ENCODE measurements at regions of chr1 and their contacts with region 1.

Region 1: GRCh38 chr1:28437934-28438699 is 67.7 kb upstream of the RCC1 start:
- DNase-seq: peak; percentile 87 to 93
- H3K4me3 ChIP-seq: peak overlapping the region; percentile 56
- H3K27ac ChIP-seq: peak overlapping the region; percentile 79
- H3K4me1 ChIP-seq: peaks cover 37% of the 10 kb centered on the region
- H3K27me3 ChIP-seq: no peaks in the 10 kb centered on the region
- CTCF ChIP-seq: no peak

Region 2: DNA sequence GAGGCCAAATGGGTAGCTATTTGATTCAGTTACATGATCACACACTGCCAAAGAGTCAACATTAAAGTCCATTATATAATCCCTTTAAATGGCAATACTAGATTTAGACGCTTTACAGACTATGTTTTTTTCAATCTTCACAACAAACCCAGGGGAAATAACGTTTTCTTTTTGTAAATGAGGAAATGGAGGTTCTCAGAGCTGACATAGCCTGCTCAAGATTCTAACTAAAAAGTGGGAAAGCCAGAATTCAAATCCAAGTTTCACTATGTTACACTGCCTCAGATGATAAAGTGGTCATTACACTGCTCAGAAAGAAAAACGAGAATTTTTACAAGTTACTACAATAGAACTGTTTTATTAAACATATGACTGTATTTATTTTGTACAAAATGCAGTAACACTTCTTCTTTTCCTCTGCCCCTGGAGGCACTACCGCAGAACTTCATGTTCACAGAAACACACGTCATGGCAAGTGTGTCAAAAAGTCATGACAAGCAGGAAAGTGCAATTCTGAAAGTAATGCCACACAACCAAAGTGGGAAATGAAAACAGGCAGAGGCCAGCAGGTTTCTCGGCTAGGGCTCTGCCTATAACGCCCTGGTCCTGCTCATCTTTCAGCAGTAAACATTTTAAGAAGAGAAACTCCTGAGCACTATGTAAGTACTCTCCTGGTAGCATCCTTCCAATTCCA is 546.8 kb before region 1 on chr1:
- CTCF ChIA-PET with region 1: no interaction called
- POLR2A ChIA-PET with region 1: no interaction called
- intact Hi-C with region 1: no loop called
- DNase-seq: no peak
- H3K4me3 ChIP-seq: no peak overlapping the region
- H3K27ac ChIP-seq: no peak overlapping the region
- H3K4me1 ChIP-seq: no peaks in the 10 kb centered on the region
- H3K27me3 ChIP-seq: no peaks in the 10 kb centered on the region
- CTCF ChIP-seq: no peak

Region 3: DNA sequence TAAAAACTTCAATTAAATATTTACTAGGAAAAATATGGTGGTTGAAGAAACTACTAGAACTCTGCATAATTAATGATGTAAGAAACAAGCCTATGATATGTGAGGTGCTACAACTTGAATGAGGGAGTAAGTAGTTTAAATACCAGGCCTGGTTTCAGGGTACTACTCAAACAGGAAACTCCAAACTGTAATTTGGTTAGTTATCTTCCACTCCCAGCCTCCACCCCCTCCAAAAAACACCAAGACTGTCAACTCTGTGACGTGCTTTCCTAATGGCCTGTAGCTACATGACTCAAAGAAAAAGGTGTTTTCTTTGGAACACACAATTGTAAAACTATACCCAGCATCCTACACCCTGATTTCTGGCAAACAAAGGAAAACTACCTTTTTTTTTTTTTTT is 11.8 kb after region 1 on chr1:
- CTCF ChIA-PET with region 1: no interaction called
- POLR2A ChIA-PET with region 1: interaction called, 22 read pairs
- intact Hi-C with region 1: loop called (anchors 1 kb)
- DNase-seq: peak; percentile 53 to 77
- H3K4me3 ChIP-seq: no peak overlapping the region
- H3K27ac ChIP-seq: peak overlapping the region; percentile 83
- H3K4me1 ChIP-seq: peaks cover 22% of the 10 kb centered on the region
- H3K27me3 ChIP-seq: no peaks in the 10 kb centered on the region
- CTCF ChIP-seq: no peak

Region 4: DNA sequence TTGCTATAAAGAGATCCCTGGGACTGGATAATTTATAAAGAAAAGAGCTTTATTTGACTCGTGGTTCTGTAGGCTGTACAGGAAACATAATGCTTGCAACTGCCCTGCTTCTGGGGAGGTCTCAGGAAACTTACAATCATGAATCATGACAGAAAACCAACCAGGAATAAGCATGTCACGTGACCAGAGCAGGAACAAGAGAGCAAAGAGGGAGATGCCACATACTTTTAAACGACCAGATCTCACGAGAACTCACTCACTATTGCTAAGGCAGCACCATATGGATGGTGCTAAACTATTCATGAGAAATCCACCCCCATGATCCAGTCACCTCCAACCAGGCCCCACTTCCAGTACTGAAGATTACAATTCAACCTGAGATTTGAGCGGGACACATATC is 18.0 kb after region 1 on chr1:
- CTCF ChIA-PET with region 1: no interaction called
- POLR2A ChIA-PET with region 1: interaction called, 14 read pairs
- intact Hi-C with region 1: no loop called
- DNase-seq: no peak
- H3K4me3 ChIP-seq: no peak overlapping the region
- H3K27ac ChIP-seq: no peak overlapping the region
- H3K4me1 ChIP-seq: peaks cover 6% of the 10 kb centered on the region; the same call in 1 of the 2 replicates
- H3K27me3 ChIP-seq: no peaks in the 10 kb centered on the region
- CTCF ChIP-seq: no peak

Region 5: DNA sequence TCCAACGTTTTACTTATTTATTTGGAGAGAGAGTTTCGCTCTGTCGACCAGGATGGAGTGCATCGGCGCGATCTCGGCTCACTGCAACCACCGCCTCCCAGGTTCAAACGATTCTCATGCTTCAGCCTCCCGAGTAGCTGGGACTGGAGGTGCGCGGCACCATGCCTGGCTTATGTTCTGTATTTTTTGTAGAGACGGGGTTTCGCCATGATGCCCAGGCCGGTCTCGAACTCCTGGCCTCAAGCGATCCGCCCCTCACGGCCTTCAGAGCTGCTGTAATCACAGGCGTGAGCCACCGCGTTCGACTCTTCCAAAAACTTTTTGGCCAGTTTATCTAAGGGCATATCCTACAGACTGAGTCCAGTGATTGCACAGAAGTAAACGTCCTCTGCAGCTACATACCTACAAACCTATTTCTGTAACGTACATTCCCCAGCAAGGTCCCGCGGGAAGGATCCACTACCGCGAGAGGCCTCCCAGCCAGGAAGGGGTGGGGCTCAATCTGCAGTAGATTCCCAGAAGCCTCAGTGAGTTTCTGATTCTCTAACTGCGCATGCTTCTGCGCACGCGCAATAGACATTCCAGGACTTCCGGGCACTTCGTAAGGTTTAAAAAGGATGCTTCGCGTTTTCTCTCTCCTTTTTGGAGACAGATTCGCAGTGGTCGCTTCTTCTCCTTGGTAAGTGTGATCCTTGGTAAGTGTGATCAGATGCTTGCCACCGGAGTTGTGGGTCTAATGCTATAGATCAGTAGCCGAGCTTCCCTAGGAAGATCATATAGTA is 67.5 kb after region 1 on chr1 and contains the start of gene RCC1:
- CTCF ChIA-PET with region 1: no interaction called
- POLR2A ChIA-PET with region 1: interaction called, 7 read pairs
- intact Hi-C with region 1: loop called (anchors 5 kb)
- DNase-seq: peak; percentile 92 to 95
- H3K4me3 ChIP-seq: peak within 1 kb of the TSS; percentile 83
- H3K27ac ChIP-seq: peak within 1 kb of the TSS; percentile 99
- H3K4me1 ChIP-seq: peaks cover 38% of the 10 kb centered on the region
- H3K27me3 ChIP-seq: 0 out of 2 replicates have a peak, but pooled peaks cover 3% of the 10 kb centered on the region
- CTCF ChIP-seq: no peak
- total RNA-seq, gene RCC1: 134 and 156 TPM in 2 replicates

Region 6: DNA sequence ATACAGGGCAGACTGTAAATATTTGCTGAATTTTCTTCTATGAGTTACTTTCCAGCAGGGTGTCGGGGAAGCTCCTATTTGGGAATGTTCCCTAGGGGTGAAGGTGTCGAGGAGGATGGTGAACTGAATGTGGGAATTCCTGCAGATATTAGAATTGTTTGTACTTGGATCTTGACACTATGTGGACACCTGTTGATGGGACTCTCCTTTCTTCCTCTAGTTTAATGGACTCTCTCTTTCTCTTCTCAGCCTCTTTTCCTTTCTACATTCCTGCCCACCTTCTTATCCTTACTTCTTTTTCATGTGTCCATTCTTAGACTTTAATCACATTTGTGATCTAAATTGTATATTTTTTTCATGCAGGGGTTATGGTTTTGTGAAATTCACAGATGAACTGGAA is 128.8 kb after region 1 on chr1:
- CTCF ChIA-PET with region 1: no interaction called
- POLR2A ChIA-PET with region 1: no interaction called
- intact Hi-C with region 1: no loop called
- DNase-seq: no peak
- H3K4me3 ChIP-seq: no peak overlapping the region
- H3K27ac ChIP-seq: no peak overlapping the region
- H3K4me1 ChIP-seq: no peaks in the 10 kb centered on the region
- H3K27me3 ChIP-seq: no peaks in the 10 kb centered on the region
- CTCF ChIP-seq: no peak

Measured in PC-9 (cell line).